ENCODE measurements at regions of chr10 and their contacts with region 1.

Region 1: GRCh38 chr10:71212318-71213126 is at the start of gene UNC5B:
- DNase-seq: peak; percentile 96
- ATAC-seq: peak; percentile 94
- H3K4me3 ChIP-seq: peak within 1 kb of the TSS; percentile 75
- H3K27ac ChIP-seq: peak within 1 kb of the TSS; percentile 73
- H3K4me1 ChIP-seq: peaks cover 40% of the 10 kb centered on the region
- H3K27me3 ChIP-seq: peaks cover 16% of the 10 kb centered on the region
- CTCF ChIP-seq: peak; percentile 26
- total RNA-seq, gene UNC5B: 16.0 TPM

Region 2: GRCh38 chr10:70925377-70926225 is 286.9 kb before region 1 on chr10:
- intact Hi-C with region 1: loop called (anchors 5 kb)
- DNase-seq: peak; percentile 80
- ATAC-seq: peak; percentile 78
- H3K4me3 ChIP-seq: no peak overlapping the region
- H3K27ac ChIP-seq: no peak overlapping the region
- H3K4me1 ChIP-seq: no peaks in the 10 kb centered on the region
- H3K27me3 ChIP-seq: no peaks in the 10 kb centered on the region
- CTCF ChIP-seq: peak; percentile 94

Region 3: DNA sequence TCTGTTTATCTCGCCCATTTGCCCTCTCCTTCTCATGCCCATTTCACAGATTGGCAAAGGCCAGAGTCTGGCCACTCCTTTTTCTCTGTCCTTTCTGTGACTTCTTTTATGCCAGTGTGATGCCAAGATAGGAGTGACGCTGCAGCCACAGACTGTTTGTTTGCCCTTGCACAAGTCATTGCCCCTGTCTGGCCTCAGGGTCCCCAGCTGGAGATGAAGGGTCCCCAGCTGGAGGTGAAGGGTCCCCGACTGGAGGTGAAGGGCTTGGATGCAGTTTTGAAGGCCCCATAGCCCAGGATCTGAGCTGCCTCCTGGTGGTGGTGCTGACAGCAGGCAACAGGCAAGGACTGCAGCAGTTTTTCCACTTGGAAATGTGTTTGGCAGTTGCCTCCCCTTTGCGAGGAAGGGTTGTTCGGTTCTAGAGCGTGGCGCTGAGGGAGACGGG is 55.7 kb after region 1 on chr10:
- intact Hi-C with region 1: loop called (anchors 10 kb)
- DNase-seq: no peak
- ATAC-seq: no peak
- H3K4me3 ChIP-seq: no peak overlapping the region
- H3K27ac ChIP-seq: no peak overlapping the region
- H3K4me1 ChIP-seq: peaks cover 10% of the 10 kb centered on the region
- H3K27me3 ChIP-seq: no peaks in the 10 kb centered on the region
- CTCF ChIP-seq: peak; percentile 23

Region 4: DNA sequence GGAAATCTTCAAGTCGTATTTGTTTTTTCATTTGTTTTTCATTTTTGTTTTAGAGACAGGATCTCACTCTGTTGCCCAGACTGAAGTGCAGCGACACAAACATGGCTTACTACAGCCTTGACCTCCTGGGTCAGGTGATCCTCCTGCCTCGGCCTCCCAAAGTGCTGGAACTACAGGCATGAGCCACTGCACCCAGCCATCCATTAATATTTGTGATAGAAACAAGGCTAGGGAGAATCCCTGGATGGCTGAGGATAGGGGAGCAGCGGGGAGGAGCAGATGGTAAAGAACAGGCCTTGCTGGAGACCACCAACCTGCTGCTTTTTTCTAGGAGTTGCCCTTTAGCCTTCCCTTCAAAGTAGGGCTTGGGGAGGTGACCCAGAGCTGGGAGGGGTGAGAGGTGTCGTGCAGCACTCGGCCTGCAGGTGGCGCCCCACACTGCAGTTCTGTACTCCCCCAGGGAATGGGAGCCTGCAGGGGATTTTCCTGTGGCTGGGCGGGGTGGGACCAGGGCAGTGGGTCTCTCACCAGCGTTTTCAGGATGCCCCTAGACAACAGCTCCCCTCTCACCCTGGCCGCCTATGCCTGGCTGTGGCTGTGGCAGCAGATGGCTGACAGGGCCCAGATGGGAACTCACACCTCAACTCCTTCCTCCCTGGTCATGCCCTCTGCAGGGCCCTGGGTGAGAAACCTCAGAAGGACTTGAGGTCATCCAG is 171.6 kb after region 1 on chr10:
- intact Hi-C with region 1: no loop called
- DNase-seq: peak; percentile 88
- ATAC-seq: peak; percentile 95
- H3K4me3 ChIP-seq: no peak overlapping the region
- H3K27ac ChIP-seq: no peak overlapping the region
- H3K4me1 ChIP-seq: no peaks in the 10 kb centered on the region
- H3K27me3 ChIP-seq: no peaks in the 10 kb centered on the region
- CTCF ChIP-seq: peak; percentile 92